Sigmoid colon (tissue), 7 donors: ENCODE measurements at regions of chr7 and their contacts with region 1.

Region 1: DNA sequence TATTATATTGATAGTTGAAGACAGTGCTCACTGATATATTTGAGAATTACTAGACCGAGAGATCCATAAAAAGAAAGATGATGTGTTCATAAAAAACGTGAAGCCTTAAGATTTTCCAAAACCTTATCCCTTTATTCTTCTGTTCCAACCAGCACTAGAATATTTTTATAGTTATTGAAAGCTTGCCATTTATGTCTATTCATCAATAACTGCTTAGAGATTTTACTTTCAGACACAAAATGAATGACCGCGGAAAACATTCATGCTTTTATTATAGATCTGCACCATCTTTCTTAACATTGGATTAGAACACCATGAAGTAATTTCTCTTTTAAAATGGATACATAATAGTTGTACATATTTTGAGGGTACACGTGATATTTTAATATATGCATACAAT is 77.6 kb downstream of the FBXL13 start:
- DNase-seq: no peak
- H3K4me3 ChIP-seq: no peak overlapping the region
- H3K27ac ChIP-seq: no peak overlapping the region
- H3K4me1 ChIP-seq: peaks cover 0 to 21% (median 13%) of the 10 kb centered on the region in 4 donors
- H3K27me3 ChIP-seq: no peaks in the 10 kb centered on the region
- CTCF ChIP-seq: no peak
- EP300 ChIP-seq: no peak
- POLR2A ChIP-seq: no peak

Region 2: DNA sequence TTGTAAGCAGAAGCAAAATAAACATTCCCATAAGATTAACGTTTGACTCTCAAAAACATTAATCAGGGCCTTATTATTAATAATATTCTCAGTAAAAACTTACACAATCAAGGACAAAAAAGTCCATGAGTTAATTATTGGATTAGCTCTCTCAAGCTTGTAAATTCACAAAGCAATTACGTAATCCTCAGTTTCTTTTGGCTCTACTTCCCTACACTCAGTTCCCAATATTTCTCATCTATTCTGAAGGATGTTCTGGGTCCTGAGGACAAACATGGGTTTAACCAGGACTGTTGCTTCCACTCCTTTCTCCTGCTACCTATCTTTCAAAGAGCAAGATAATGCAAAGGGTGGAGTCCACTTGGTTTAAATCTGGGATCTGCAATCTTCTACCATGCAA is 62.5 kb after region 1 on chr7:
- intact Hi-C with region 1: loop called (anchors 5 kb)
- DNase-seq: no peak
- H3K4me3 ChIP-seq: no peak overlapping the region
- H3K27ac ChIP-seq: no peak overlapping the region
- H3K4me1 ChIP-seq: no peaks in the 10 kb centered on the region
- H3K27me3 ChIP-seq: no peaks in the 10 kb centered on the region
- CTCF ChIP-seq: no peak
- EP300 ChIP-seq: no peak
- POLR2A ChIP-seq: no peak